BJ (cell line): ENCODE measurements at regions of chr10 and their contacts with region 1.

Region 1: DNA sequence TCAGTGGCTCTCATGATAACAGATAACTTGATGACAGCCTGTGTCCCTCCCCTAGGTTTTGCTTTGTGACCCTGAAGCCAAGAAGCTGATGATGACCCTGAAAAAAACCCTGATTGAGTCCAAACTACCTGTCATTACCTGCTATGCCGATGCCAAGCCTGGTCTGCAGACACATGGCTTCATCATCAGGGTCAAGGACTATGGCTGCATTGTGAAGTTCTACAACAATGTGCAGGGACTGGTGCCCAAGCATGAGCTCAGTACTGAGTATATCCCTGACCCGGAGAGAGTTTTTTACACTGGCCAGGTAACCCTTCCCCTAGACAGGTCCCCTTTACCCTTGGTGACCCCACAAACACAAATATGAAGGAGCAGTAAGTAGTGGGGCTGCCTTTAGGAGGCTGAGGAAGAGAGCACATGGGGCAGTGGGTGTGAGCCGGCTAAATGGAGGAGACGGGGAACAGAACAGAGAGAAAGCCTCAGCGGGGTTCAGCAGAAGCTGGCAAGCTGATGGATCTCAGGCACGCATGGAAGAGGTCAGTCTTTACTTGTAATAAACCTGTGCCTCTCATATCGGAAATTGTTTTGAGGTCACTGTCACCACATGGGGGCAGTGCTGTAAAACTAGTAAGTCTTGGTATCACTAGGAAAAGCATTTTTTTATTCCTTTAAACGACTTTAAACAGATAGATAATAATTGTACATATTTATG is 20.2 kb downstream of the PDCD11 start:
- DNase-seq: peak; percentile 14
- H3K4me3 ChIP-seq: no peak overlapping the region
- H3K27me3 ChIP-seq: no peaks in the 10 kb centered on the region
- CTCF ChIP-seq: peak; percentile 55

Region 2: DNA sequence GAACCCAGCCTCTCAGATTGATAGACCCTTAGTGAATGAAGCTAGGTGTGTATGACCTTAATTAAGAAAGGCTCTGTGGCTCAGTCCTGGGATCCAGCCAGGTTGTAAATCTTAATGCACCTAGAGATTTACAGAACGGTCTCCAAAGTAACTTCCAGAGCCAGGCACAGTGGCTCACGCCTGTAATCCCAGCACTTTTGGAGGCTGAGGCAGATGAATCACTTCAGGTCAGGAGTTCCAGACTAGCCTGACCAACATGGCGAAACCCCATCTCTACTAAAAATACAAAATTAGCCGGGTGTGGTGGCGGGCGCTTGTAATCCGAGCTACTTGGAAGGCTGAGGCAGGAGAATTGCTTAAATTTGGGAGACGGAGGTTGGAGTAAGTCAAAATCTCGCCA is 11.3 kb after region 1 on chr10:
- CTCF ChIA-PET with region 1: interaction called, 19 read pairs
- POLR2A ChIA-PET with region 1: no interaction called
- DNase-seq: no peak
- H3K4me3 ChIP-seq: no peak overlapping the region
- H3K27me3 ChIP-seq: no peaks in the 10 kb centered on the region
- CTCF ChIP-seq: no peak

Region 3: DNA sequence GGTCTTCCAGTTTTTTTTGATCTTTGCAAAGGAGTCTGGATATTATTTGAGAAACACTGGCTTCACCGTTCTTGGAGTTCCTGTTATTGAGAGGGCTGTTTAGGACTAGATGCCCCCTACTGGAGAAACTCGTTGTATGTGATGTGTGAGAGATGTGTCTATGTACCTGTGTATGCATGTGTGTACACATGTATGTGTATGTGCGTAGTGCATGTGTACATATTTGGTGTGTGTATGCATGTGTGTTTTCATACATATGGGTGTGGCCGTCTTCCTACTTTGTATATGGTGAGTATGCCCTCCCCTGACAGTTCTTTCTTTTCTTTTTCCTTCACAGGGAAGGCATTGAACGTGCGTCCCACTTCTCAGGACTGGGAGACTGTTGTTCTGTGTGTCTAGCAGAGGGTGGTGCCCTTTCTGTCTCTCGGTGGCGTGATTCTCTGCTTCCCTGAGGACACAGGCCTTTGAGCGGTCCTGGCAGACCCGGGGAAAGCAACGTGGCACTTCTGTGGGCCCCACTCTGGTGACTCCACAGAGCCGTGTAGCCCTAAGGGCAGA is 65.5 kb after region 1 on chr10:
- CTCF ChIA-PET with region 1: interaction called, 93 read pairs
- POLR2A ChIA-PET with region 1: no interaction called
- DNase-seq: no peak
- H3K4me3 ChIP-seq: no peak overlapping the region
- H3K27me3 ChIP-seq: no peaks in the 10 kb centered on the region
- CTCF ChIP-seq: peak; percentile 72

Region 4: GRCh38 chr10:103491493-103492381 is 75.1 kb after region 1 on chr10:
- CTCF ChIA-PET with region 1: interaction called, 93 read pairs
- POLR2A ChIA-PET with region 1: no interaction called
- DNase-seq: peak; percentile 97
- H3K4me3 ChIP-seq: no peak overlapping the region
- H3K27me3 ChIP-seq: peaks cover 12% of the 10 kb centered on the region
- CTCF ChIP-seq: no peak